Activated T-helper 1 cell treated with anti-CD3 and anti-CD28 coated beads, Interleukin-12 subunit alpha, Interleukin-12 subunit beta, Interleukin-2, Interleukin-4 antibody, amounts not matched to agents 30 ng/mL and 10 ng/mL and 1 ng/mL, durations not matched to agents 14 hours and 24 hours and 36 hours (primary cell): ENCODE measurements at regions of chr10 and their contacts with region 1.

Region 1: GRCh38 chr10:127990846-127991542 is 84.1 kb downstream of the PTPRE start:
- DNase-seq: peak; percentile 35
- H3K4me3 Mint-ChIP-seq: peak overlapping the region; percentile 65
- H3K27ac Mint-ChIP-seq: peak overlapping the region; percentile 96
- H3K4me1 Mint-ChIP-seq: peaks cover 61% of the 10 kb centered on the region
- H3K27me3 Mint-ChIP-seq: no peaks in the 10 kb centered on the region

Region 2: DNA sequence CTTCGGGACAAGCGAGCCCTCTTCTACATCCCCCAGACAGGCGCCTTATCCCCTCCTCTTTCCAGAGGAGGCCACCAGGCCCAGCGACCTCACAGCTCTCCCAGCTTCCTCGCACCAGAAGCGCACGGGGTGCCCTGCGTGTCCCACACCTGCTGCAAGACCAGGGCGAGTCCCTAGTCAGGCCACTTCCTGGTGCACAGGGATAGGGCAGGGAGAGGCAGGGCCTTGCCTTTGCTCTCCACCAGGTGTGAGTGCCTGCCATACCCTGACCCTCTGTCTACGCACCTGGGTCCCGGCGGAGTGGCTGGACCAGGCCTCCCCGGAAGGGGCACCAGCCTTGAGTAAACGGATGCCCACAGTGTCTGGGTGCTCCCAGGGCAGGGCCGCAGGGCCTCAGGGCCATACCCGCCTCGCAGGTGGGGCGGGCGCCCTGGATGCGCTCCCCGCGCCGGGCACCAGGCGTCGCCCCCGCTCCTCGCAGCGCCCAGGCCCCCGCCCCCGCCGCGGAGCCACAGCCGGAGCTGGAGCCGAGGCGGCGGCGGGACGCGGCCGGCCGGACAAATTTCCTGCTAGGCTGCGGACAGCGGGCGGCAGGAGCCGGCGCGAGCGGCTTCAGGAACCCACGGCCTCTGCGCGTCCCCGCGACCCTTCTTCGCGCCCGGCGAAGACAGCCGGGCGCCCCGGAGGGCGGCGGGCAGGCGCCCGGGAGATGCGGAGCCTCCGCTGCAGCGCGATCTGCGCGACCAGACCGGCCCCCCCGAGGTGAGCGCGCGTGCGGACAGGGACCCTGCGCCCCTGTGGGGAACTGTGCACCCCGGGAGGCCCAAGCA is 84.2 kb before region 1 on chr10 and contains the start of gene PTPRE:
- intact Hi-C with region 1: loop called (anchors 5 kb)
- DNase-seq: peak; percentile 66
- H3K4me3 Mint-ChIP-seq: peak within 1 kb of the TSS; percentile 66
- H3K27ac Mint-ChIP-seq: no peak within 1 kb of the TSS
- H3K4me1 Mint-ChIP-seq: no peaks in the 10 kb centered on the region
- H3K27me3 Mint-ChIP-seq: peaks cover 26% of the 10 kb centered on the region
- total RNA-seq, gene PTPRE: 40.8 and 41.8 TPM in 2 replicates

Region 3: GRCh38 chr10:128011175-128011979 is 20.4 kb after region 1 on chr10:
- intact Hi-C with region 1: loop called (anchors 1 kb)
- DNase-seq: peak; percentile 79
- H3K4me3 Mint-ChIP-seq: peak overlapping the region; percentile 42
- H3K27ac Mint-ChIP-seq: peak overlapping the region; percentile 29
- H3K4me1 Mint-ChIP-seq: peaks cover 10% of the 10 kb centered on the region
- H3K27me3 Mint-ChIP-seq: peaks cover 2% of the 10 kb centered on the region

Region 4: DNA sequence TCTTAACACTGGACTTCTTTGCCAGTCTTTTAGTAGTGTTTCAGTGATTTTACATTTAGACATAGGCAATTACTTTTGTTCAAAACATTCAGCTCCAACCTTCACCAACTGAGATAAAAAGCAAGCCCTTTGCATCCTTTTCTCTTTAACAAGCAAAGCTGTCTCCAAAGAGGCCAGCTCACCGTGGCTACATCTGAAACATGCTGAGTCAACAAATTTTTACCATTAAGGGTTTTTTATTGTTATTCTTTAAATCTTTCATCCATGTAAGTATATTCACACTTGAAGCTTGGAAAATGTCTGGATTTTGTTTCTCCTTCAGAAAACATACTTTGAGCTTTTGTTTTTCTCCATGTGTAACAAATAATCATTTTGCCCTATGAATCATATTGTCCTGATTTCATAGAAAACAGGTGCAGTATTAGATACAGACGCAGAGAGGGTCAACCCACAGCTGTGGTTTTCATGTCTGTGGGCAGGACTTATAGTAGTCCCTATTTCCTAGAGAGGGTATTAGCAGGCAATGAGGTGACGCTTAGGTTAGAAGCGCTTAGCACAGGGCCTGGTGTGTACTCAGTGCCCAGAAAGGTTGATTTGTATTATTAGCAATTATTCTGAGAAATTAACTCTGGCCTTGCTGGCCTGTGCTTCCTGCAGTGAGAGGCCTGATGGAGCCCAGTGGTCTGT is 35.8 kb after region 1 on chr10:
- intact Hi-C with region 1: no loop called
- DNase-seq: no peak
- H3K4me3 Mint-ChIP-seq: no peak overlapping the region
- H3K27ac Mint-ChIP-seq: peak overlapping the region; percentile 63
- H3K4me1 Mint-ChIP-seq: peaks cover 13% of the 10 kb centered on the region
- H3K27me3 Mint-ChIP-seq: no peaks in the 10 kb centered on the region

Region 5: DNA sequence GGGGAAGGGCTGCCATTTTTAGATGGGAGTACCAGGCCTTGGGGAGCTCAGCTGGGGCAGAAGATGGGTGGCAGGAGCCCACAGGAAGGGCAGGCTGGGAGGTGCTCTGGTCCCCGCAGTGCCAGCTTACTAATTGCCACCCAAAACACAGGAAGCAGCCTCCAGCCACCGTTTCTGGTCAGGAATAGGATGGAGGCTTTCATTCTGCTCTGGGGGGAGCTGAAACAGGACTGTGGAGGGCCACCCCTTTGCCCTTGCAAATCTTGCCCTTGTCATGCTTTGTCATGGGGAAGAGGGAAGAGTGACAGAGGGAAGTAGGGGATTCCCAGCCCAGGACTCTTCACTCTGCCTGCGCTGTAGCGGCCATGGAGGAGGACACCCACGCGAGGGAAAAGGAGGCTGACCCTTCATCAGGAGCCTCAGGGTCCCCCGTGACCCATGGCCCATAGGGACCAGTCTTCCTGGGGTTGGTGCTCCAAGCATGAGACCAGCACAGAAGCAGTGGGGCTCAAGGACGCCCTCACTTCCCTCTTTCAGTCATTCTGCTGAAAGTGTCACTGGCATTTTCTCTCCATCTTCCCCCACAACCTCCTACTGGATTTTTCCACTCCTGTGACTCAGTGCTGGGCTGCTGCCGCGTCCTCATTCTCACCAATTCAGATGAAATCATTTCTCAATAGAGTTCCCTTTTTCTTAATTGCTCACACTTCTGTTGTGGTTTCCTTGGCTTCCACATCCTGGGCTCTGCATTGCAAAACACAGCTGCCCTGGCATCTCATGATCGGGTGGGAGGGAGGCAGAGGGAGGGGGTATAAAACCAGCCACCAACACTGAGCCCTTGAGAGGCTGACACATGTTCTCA is 73.3 kb after region 1 on chr10:
- intact Hi-C with region 1: loop called (anchors 1 kb)
- DNase-seq: peak; percentile 59
- H3K4me3 Mint-ChIP-seq: peak overlapping the region; percentile 78
- H3K27ac Mint-ChIP-seq: peak overlapping the region; percentile 93
- H3K4me1 Mint-ChIP-seq: peaks cover 63% of the 10 kb centered on the region
- H3K27me3 Mint-ChIP-seq: no peaks in the 10 kb centered on the region

Region 6: GRCh38 chr10:128150045-128150493 is 159.1 kb after region 1 on chr10:
- intact Hi-C with region 1: loop called (anchors 1 kb)
- DNase-seq: peak; percentile 77
- H3K4me3 Mint-ChIP-seq: peak overlapping the region; percentile 76
- H3K27ac Mint-ChIP-seq: no peak overlapping the region
- H3K4me1 Mint-ChIP-seq: peaks cover 32% of the 10 kb centered on the region
- H3K27me3 Mint-ChIP-seq: peaks cover 27% of the 10 kb centered on the region